AG04450 (cell line): ENCODE measurements at regions of chr6 and their contacts with region 1.

Region 1: GRCh38 chr6:5072440-5072839 is 12.7 kb upstream of the PPP1R3G start:
- DNase-seq: no peak
- H3K4me3 ChIP-seq: no peak overlapping the region
- H3K27ac ChIP-seq: no peak overlapping the region
- H3K27me3 ChIP-seq: peaks cover 6% of the 10 kb centered on the region
- CTCF ChIP-seq: no peak

Region 2: GRCh38 chr6:4703382-4703781 is 369.1 kb before region 1 on chr6:
- CTCF ChIA-PET with region 1: no interaction called
- POLR2A ChIA-PET with region 1: interaction called, 12 read pairs
- DNase-seq: no peak
- H3K4me3 ChIP-seq: no peak overlapping the region
- H3K27ac ChIP-seq: no peak overlapping the region
- H3K27me3 ChIP-seq: no peaks in the 10 kb centered on the region
- CTCF ChIP-seq: no peak

Region 3: GRCh38 chr6:4809999-4810918 is 262.2 kb before region 1 on chr6:
- CTCF ChIA-PET with region 1: no interaction called
- POLR2A ChIA-PET with region 1: no interaction called
- DNase-seq: no peak
- H3K4me3 ChIP-seq: no peak overlapping the region
- H3K27ac ChIP-seq: no peak overlapping the region
- H3K27me3 ChIP-seq: no peaks in the 10 kb centered on the region
- CTCF ChIP-seq: no peak

Region 4: DNA sequence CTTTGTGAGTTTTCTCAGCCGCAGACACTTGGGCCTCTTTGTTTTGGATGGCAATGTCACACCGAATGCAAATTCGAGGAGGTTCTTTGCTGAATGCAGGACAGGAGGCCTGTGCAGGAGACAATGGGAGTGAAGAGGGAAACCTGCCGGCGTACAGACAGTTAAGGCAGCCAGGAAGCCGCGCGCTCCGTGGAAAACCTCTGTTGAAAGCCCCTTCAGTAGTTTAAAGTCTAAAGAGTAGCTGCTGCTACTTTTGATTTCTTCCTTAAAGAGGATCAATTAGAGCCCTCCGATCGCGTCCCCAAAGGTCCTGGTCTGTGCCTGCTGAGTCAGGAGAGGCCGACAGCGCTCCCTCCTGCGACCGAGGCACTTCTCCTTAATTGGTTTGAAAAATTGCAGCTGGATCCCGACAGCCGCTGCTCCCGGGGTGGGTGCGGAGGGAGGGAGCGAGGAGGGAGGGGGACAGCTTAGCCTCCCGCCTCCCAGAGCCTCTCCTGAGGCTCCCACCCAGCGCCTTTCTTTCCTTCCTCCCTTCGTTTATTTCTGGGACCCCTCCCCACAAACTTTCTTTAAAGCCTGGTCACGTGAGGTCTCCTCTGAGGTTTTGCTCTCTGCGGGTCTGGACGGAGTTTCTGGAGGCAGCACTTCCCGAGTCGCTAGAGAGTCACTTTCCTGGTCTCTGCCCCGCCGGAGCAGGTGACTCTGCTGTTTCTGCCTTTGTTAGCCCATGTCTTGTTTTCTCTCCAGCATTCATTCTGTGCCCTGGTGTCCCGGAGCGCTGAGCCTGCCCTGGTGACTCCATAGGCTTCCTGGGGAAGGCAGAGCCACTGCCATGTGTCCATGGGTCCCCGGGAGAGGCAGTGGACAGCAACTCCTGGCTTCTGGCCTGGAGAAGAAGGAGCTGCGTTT is 46.3 kb before region 1 on chr6:
- CTCF ChIA-PET with region 1: no interaction called
- POLR2A ChIA-PET with region 1: no interaction called
- DNase-seq: no peak
- H3K4me3 ChIP-seq: peak overlapping the region; percentile 63
- H3K27ac ChIP-seq: peak overlapping the region; percentile 31
- H3K27me3 ChIP-seq: no peaks in the 10 kb centered on the region
- CTCF ChIP-seq: 0 out of 2 replicates have a peak, but pooled peaks have one; percentile 25